ENCODE measurements at regions of chr18 and their contacts with region 1.

Region 1: GRCh38 chr18:62131301-62131909 is 55.5 kb downstream of the PIGN start:
- DNase-seq: peak; percentile 74
- H3K4me3 Mint-ChIP-seq: no peak overlapping the region
- H3K27ac Mint-ChIP-seq: no peak overlapping the region
- H3K4me1 Mint-ChIP-seq: no peaks in the 10 kb centered on the region
- H3K27me3 Mint-ChIP-seq: no peaks in the 10 kb centered on the region

Region 2: GRCh38 chr18:61581578-61582201 is 549.7 kb before region 1 on chr18:
- CTCF ChIA-PET with region 1: interaction called, 16 read pairs
- DNase-seq: peak; percentile 76
- H3K4me3 Mint-ChIP-seq: no peak overlapping the region
- H3K27ac Mint-ChIP-seq: no peak overlapping the region
- H3K4me1 Mint-ChIP-seq: no peaks in the 10 kb centered on the region
- H3K27me3 Mint-ChIP-seq: peaks cover 22% of the 10 kb centered on the region

Region 3: GRCh38 chr18:61635901-61636528 is 495.4 kb before region 1 on chr18:
- CTCF ChIA-PET with region 1: interaction called, 69 read pairs
- DNase-seq: peak; percentile 56
- H3K4me3 Mint-ChIP-seq: no peak overlapping the region
- H3K27ac Mint-ChIP-seq: no peak overlapping the region
- H3K4me1 Mint-ChIP-seq: no peaks in the 10 kb centered on the region
- H3K27me3 Mint-ChIP-seq: peaks cover 9% of the 10 kb centered on the region

Measured in activated naive CD4-positive, alpha-beta T cell treated with anti-CD3 and anti-CD28 coated beads, Interleukin-2, amount 10 ng/mL, durations not matched to agents 7 days and 5 days (primary cell).